Tibial artery (tissue), 4 donors: ENCODE measurements at regions of chr17 and their contacts with region 1.

Region 1: GRCh38 chr17:33871720-33872540 is 383.2 kb upstream of the CCL2 start:
- DNase-seq: no peak
- H3K4me3 ChIP-seq: no peak overlapping the region
- H3K27ac ChIP-seq: no peak overlapping the region
- H3K4me1 ChIP-seq: no peaks in the 10 kb centered on the region
- H3K27me3 ChIP-seq: peaks cover 0 to 3% of the 10 kb centered on the region in 2 donors
- CTCF ChIP-seq: no peak

Region 2: DNA sequence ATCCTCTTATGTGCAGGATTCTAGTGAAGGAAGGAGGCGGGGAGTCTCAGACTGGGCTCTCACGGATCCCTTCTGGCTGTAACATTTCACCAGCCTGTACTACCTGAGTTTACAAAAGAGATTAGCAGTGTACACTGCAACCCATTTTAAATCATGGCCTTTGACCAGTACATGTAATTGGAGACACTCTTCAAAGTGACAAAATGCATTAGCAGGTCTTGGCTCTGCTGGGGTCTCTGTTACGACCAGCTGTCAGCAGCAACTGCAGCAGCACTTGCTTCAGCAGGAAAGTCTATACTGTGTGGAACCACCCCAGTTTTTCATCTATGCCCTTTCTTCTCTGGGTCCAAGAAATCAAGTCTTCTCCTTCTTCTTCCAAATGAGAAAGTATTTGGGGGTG is 256.1 kb before region 1 on chr17:
- intact Hi-C with region 1: no loop called
- DNase-seq: no peak
- H3K4me3 ChIP-seq: no peak overlapping the region
- H3K27ac ChIP-seq: no peak overlapping the region
- H3K4me1 ChIP-seq: peaks cover 0 to 23% (median 6%) of the 10 kb centered on the region in 4 donors
- H3K27me3 ChIP-seq: no peaks in the 10 kb centered on the region
- CTCF ChIP-seq: no peak

Region 3: GRCh38 chr17:33914125-33914524 is 42.2 kb after region 1 on chr17:
- intact Hi-C with region 1: loop called (anchors 5 kb)
- DNase-seq: no peak
- H3K4me3 ChIP-seq: no peak overlapping the region
- H3K27ac ChIP-seq: no peak overlapping the region
- H3K4me1 ChIP-seq: no peaks in the 10 kb centered on the region
- H3K27me3 ChIP-seq: no peaks in the 10 kb centered on the region
- CTCF ChIP-seq: no peak